Heart right ventricle (tissue), 16 donors: ENCODE measurements at regions of chr20 and their contacts with region 1.

Region 1: DNA sequence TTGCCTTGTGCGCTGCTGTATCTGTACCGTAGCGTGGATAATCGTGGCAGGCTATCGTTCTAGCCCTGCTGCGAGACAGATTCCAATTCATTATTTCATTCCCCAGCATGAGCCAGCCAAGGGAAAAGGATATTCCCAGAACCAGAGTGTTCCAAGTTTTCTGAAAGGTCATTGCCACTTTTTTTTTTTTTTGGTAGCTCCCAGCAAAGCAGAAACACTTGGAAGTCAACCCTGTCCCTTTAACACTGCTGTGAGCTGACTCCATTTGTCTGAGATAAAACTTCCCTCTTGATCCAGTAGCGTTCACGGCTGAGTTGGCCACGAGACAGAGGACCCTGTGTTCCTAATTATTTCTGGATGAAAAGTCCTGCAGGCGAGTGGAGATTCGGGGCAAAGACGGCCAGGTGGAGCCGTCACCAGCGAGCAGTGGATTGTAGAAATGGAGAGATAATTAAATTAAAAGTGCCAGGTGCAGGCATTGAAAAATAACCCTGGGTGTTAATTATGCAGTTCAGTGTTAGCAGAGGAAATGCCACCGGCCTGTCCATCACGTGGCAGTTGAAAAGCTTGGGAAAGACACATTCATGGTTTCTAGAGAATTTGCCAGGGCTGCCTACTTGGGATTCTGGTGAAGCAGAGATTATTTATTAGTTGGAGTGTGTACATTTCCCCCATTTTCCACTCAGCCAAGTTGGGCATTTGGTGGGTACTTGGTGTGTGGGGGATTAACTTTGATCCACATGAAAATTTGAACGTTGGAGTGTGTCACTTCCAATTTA is 164.2 kb downstream of the SLC24A3 start:
- DNase-seq: peak; percentile 8 to 24
- ATAC-seq: peak; percentile 44 to 91 (median 74)
- H3K4me3 ChIP-seq: peak overlapping the region in 6 of 10 donors; percentile 3 to 37 (median 30)
- H3K27ac ChIP-seq: peak overlapping the region in 2 of 10 donors; percentile 14 to 44
- H3K4me1 ChIP-seq: peaks cover 0 to 14% (median 4%) of the 10 kb centered on the region in 9 donors
- H3K27me3 ChIP-seq: no peaks in the 10 kb centered on the region
- CTCF ChIP-seq: no peak

Region 2: DNA sequence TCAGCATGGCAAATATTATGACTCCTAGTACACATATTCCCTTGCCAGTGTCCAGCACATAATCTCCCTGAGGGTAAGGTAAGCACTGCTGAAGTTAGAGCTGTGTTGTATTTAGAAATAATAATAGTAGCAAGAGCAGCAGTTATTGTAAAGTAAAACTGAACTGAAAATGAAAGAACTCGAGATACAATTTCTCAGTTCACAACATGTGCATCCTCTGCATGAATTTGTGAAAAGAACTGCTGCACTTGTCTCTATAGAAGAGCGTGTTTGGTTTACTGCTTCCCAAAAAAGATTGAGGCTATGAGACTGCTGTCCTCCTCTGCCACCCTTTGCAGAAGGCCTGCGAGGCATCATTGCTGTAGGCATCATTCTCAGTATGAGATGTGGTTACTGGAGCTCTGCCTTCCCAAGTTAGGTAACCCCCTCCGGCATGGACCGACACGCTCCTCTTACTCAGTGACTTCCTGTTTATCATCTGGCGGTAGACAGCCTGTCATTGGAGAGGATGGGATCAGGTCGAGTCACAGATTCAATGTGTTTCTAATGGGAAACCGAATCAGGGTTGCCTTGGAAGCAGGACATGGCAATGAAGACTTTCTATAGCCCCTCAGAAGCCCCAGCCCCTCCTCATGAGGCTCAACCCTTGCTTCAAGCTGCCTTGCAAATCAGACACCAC is 116.1 kb before region 1 on chr20:
- intact Hi-C with region 1: no loop called
- DNase-seq: no peak
- ATAC-seq: no peak
- H3K4me3 ChIP-seq: no peak overlapping the region
- H3K27ac ChIP-seq: no peak overlapping the region
- H3K4me1 ChIP-seq: peaks cover 0 to 11% (median 0%) of the 10 kb centered on the region in 9 donors
- H3K27me3 ChIP-seq: no peaks in the 10 kb centered on the region
- CTCF ChIP-seq: no peak

Region 3: DNA sequence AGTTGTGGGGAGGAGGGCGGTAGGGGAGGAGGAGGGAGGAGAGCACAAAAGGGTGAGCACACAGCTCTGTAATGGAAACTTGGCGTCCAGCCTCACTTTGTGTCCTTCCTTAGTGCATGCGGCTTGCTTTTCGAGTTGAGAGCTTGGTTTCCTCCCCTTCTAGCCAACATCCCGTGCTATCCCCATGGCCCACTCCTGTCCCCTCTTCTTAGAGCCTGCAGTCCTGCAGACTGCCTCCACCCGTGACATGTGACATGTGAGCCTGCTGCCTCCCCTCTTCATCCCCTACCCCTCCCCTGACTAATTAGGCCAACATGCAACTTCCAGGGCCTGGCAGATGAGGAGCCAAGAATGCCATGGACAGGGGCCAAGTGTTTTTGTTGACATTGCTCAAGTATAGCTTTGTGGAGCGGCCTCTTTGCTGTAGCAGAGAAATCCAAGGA is 101.0 kb before region 1 on chr20:
- intact Hi-C with region 1: loop called in 1 of 10 experiments (anchors 10 kb)
- DNase-seq: peak; percentile 52 to 88
- ATAC-seq: peak; percentile 91 to 97 (median 94)
- H3K4me3 ChIP-seq: peak overlapping the region in 2 of 10 donors; percentile 8 to 15
- H3K27ac ChIP-seq: peak overlapping the region in 9 of 10 donors; percentile 25 to 65 (median 42)
- H3K4me1 ChIP-seq: peaks cover 4 to 24% (median 22%) of the 10 kb centered on the region in 9 donors
- H3K27me3 ChIP-seq: no peaks in the 10 kb centered on the region
- CTCF ChIP-seq: no peak

Region 4: DNA sequence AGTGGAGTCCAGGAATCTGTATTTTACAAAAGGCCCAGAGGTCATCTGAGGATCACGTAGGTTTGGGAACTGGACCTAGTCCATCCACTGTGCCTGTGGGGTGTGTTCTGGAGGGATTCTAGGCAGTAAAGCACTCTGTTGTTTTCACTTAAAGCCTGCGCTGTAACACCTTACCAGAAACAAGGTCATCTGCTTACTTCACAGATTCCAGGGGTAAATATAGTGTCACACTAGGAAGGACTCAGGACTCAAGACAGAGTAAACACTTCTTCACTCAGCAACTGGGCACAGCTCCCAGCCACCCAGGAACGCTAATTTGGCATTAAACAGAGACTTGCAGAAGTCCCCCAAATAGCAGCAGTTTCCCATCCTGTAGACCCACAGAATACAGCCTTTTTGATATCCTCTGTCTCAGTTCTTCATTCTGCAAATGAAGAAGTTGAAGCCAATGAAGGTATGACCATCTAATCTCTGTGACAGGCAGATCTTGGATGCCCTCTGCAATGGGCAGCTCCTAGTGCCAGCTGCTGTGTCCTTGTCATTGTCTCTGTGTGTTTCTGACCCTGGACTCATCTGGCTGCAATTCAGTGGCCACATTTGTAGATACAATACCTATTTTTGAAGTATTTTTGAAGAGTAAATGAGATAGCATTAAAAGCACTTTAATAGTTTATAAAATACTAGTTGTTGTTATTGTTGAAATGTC is 35.1 kb before region 1 on chr20:
- intact Hi-C with region 1: no loop called
- DNase-seq: peak in 1 of 2 donors; percentile 18
- ATAC-seq: peak in 4 of 8 donors; percentile 42 to 87 (median 68)
- H3K4me3 ChIP-seq: no peak overlapping the region
- H3K27ac ChIP-seq: no peak overlapping the region
- H3K4me1 ChIP-seq: peaks cover 0 to 10% (median 0%) of the 10 kb centered on the region in 9 donors
- H3K27me3 ChIP-seq: peaks cover 0 to 4% (median 0%) of the 10 kb centered on the region in 7 donors
- CTCF ChIP-seq: no peak

Region 5: DNA sequence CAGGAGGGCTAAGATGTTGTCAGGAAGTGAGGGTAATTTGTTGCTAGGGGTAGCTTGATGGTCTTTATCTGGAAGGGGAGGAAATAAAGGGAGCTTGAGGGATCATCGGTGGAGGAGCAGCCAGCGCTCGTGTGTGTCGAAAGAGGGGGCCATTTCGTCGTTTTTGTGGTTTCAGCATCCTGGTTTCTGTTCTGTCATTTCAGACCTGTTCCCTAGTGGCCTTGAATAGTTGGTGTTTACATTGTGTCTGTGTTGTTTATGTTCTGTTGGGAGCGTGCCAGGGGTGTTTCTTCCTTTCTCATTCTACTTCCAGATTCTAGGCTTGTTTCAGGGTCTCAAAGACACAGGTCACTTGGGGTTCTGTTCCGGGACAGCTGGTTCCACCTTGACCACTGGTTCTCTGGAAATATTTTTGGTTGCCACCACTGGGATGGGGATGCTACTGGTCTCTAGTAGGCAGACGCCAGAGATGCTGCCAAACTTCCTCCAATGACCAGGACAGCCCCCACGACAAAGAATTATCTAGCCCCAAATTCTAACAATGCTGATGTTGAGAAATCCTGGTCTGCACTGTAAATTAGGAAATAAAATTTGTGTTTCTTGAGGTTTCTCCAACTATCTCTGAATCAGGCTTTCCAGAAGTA is 526.6 kb after region 1 on chr20:
- intact Hi-C with region 1: loop called in 1 of 10 experiments (anchors 10 kb)
- DNase-seq: peak in 1 of 2 donors; percentile 47
- ATAC-seq: peak in 7 of 8 donors; percentile 31 to 64 (median 41)
- H3K4me3 ChIP-seq: no peak overlapping the region
- H3K27ac ChIP-seq: peak overlapping the region in 4 of 10 donors; percentile 3 to 37 (median 30)
- H3K4me1 ChIP-seq: peaks cover 5 to 66% (median 45%) of the 10 kb centered on the region in 9 donors
- H3K27me3 ChIP-seq: no peaks in the 10 kb centered on the region
- CTCF ChIP-seq: peak in 7 of 9 donors; percentile 8 to 54 (median 32)